Activated B cell treated with CpG ODN at 0.5 μM for 24 hours (primary cell): ENCODE measurements at regions of chr9 and their contacts with region 1.

Region 1: DNA sequence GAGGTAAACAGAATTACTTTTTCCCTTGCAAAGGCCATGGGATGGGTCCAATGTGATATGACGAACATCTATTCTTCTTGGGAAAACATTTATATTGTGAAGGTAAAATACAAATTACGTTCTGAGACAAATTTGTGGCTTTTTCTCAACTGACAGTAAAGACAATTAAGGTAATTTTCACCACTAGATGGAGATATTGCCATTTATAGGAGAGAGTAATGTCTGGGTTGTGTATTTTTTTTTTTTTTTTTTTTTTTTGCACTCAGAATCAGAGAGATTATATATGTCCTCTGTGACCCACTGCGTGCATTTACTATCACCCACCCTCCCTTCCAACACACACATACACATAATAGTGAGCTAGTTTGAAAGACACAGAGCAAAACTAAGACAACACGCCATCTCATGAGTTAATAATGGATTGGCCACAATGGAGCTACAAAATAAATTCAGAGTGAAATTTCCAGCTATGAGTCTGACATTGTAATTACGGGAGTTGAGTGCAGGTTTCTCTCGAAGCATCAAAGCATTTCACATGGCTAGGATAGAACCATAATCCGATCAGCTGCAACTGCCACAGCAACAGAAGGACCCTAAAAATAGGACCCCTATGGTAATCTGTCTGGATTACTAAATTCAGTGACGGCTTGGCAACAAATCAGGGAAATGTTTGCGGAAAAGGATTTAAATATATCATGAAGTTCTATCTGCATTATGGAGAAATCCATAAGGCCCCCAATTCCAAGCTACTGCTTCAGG is 49.2 kb downstream of the ANXA1 start:
- DNase-seq: no peak
- ATAC-seq: no peak
- H3K4me3 Mint-ChIP-seq: no peak overlapping the region
- H3K27ac Mint-ChIP-seq: no peak overlapping the region
- H3K4me1 Mint-ChIP-seq: no peaks in the 10 kb centered on the region
- H3K27me3 Mint-ChIP-seq: peaks cover 4% of the 10 kb centered on the region
- CTCF ChIP-seq: no peak

Region 2: DNA sequence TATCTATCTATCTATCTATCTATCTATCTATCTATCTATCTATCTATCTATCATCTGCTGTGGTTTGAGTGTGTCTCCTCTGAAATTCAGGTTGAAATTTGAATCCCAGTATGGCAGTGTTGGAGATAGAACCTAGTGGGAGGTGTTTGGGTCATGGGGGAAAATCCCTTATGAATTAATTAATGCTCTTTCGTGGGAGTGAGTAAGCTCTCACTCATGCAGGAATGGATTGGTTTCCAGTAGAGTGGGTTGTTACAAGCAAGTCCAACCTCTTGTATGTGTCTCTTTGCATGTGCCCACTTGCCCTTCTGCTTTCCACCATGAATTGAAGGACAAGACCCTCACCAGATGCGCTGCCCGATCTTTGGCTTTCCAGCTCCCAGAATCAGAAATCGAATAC is 63.8 kb after region 1 on chr9:
- CTCF ChIA-PET with region 1: no interaction called
- POLR2A ChIA-PET with region 1: no interaction called
- intact Hi-C with region 1: no loop called
- DNase-seq: no peak
- ATAC-seq: no peak
- H3K4me3 Mint-ChIP-seq: no peak overlapping the region
- H3K27ac Mint-ChIP-seq: no peak overlapping the region
- H3K4me1 Mint-ChIP-seq: no peaks in the 10 kb centered on the region
- H3K27me3 Mint-ChIP-seq: no peaks in the 10 kb centered on the region
- CTCF ChIP-seq: no peak

Region 3: DNA sequence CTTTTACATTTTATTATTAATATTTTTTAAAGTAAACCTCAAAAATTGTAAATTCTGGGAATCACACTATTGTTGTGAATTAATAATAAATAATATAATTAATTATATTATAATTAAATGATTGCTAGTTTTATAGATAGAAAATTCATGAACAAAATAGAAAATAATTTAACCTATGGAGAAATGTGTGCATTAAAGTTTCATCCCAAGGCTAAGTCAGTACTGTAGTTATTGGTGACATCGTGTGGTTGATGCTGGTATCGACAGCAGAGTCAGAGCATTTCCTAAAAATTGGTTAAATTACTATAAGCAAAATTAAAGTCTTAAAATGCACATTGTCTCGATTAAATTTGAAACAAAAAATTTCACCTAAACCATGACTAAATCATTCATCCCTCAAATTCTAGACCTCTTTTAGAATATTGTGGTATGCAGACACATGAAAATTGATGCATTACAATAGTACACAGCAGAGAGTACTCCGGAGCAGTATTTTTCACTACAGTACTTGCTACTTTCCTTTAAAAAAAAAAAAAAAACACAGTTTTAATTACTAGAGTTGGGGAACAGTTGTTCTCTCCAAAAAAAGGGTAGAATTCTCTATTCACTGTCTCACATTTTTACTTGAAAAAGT is 1370.1 kb after region 1 on chr9:
- CTCF ChIA-PET with region 1: interaction called, 3 read pairs
- POLR2A ChIA-PET with region 1: no interaction called
- intact Hi-C with region 1: loop called (anchors 1 kb)
- DNase-seq: no peak
- ATAC-seq: no peak
- H3K4me3 Mint-ChIP-seq: no peak overlapping the region
- H3K27ac Mint-ChIP-seq: no peak overlapping the region
- H3K4me1 Mint-ChIP-seq: no peaks in the 10 kb centered on the region
- H3K27me3 Mint-ChIP-seq: peaks cover 4% of the 10 kb centered on the region
- CTCF ChIP-seq: peak; percentile 24

Region 4: DNA sequence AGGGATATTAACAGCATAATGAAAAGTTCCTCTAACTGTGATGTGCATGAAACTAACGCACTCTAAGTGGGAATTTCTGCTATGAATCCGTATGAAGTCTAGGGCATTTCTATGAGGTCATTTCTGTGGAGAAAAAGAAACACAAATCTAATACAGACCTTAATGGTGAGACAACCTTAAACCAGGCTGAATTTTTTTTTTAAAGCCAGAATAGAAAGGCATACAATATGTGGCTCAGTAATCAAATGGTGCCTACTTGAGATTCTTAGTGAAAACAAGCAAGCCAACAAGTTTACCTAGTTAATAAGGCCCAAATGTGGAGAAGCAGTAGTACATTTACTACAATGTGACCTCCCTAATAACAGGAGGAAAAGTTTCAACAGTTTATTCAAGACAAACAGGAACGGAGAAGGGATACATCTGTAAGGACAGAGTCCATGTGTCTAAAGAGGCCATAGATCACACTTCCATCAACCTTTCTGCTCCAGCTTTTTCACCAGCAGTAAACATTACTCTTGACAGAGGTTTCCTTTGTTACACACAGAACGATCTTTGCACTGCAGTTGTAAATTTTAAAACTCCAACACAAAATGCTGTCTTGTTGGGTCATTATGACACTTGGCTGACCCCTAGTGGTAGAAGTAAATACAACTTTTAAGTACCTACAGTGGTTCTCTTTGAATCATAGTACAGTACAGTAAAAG is 1801.0 kb after region 1 on chr9:
- CTCF ChIA-PET with region 1: no interaction called
- POLR2A ChIA-PET with region 1: no interaction called
- intact Hi-C with region 1: loop called (anchors 5 kb)
- DNase-seq: no peak
- ATAC-seq: peak; percentile 85
- H3K4me3 Mint-ChIP-seq: no peak overlapping the region
- H3K27ac Mint-ChIP-seq: no peak overlapping the region
- H3K4me1 Mint-ChIP-seq: peaks cover 9% of the 10 kb centered on the region
- H3K27me3 Mint-ChIP-seq: no peaks in the 10 kb centered on the region
- CTCF ChIP-seq: peak; percentile 40